Activated T-helper 2 cell treated with anti-CD3 and anti-CD28 coated beads, Interferon-gamma antibody, Interleukin-2, Interleukin-4, amounts not matched to agents 10 μg/mL and 5 μg/mL and 100 μg/mL, durations not matched to agents 14 hours and 24 hours and 36 hours (primary cell): ENCODE measurements at regions of chr6 and their contacts with region 1.

Region 1: GRCh38 chr6:157021344-157021992 is 244.3 kb downstream of the ARID1B start:
- DNase-seq: peak; percentile 89
- H3K4me3 Mint-ChIP-seq: peak overlapping the region; percentile 94
- H3K27ac Mint-ChIP-seq: peak overlapping the region; percentile 99
- H3K4me1 Mint-ChIP-seq: peaks cover 46% of the 10 kb centered on the region
- H3K27me3 Mint-ChIP-seq: no peaks in the 10 kb centered on the region

Region 2: GRCh38 chr6:155314092-155314772 is 1707.2 kb before region 1 on chr6 and contains the start of gene TFB1M:
- intact Hi-C with region 1: loop called (anchors 10 kb)
- DNase-seq: peak; percentile 99
- H3K4me3 Mint-ChIP-seq: peak within 1 kb of the TSS; percentile 96
- H3K27ac Mint-ChIP-seq: peak within 1 kb of the TSS; percentile 93
- H3K4me1 Mint-ChIP-seq: peaks cover 36% of the 10 kb centered on the region
- H3K27me3 Mint-ChIP-seq: no peaks in the 10 kb centered on the region
- total RNA-seq, gene TFB1M: 32.5 and 39.8 TPM in 2 replicates

Region 3: GRCh38 chr6:156686995-156687788 is 334.3 kb before region 1 on chr6:
- intact Hi-C with region 1: loop called (anchors 2 kb)
- DNase-seq: peak; percentile 75
- H3K4me3 Mint-ChIP-seq: peak overlapping the region; percentile 84
- H3K27ac Mint-ChIP-seq: peak overlapping the region; percentile 73
- H3K4me1 Mint-ChIP-seq: peaks cover 29% of the 10 kb centered on the region
- H3K27me3 Mint-ChIP-seq: peaks cover 24% of the 10 kb centered on the region

Region 4: DNA sequence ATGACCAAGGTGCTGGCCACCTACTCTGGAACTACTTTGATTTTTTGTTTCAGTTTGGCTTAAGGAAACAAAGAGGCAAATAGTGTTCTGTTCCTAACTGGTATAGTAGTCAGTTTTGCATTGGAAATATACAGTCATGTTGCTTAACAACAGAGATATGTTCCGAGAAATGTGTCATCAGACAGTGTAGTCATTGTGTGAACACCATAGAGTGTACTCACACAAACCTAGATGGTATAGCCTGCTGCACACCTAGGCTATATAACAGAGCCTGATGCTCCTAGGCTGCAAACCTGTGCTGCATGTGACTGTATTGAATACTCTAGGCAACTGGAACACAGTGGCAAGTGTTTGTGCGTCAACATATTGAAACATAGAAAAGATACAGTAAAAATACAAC is 163.9 kb before region 1 on chr6:
- intact Hi-C with region 1: loop called (anchors 5 kb)
- DNase-seq: no peak
- H3K4me3 Mint-ChIP-seq: no peak overlapping the region
- H3K27ac Mint-ChIP-seq: peak overlapping the region; percentile 74
- H3K4me1 Mint-ChIP-seq: peaks cover 49% of the 10 kb centered on the region
- H3K27me3 Mint-ChIP-seq: no peaks in the 10 kb centered on the region

Region 5: DNA sequence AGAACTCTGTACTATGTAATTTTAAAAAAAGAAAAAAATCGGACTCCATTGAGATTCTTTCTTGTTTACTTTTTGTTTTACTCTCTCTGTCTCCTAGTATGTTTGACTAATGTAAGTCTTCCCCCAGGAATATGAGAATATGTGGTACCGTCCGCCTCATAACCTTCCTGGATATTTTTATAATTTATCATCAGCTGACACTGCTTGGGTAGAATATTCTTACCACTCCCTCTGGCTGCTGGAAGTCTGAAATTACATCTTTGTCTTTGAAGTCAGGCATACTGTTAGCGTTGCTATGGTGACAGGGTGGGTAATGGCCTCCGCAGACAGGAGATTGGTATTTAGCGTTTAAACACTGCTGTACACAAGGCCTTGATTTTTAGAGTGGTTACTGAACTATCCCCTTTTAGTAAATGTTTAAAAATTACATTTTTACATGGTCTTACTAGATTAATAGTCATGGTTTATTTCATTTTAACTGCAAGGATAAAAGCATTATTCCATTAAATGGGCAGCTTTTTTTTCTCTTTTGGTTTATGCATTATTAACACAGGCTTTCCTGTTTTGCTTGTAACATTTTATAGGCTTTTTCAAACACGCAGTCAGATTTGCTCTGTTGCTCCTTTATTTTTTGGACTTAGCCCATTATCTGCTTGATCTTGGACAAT is 67.9 kb before region 1 on chr6:
- intact Hi-C with region 1: loop called (anchors 2 kb)
- DNase-seq: no peak
- H3K4me3 Mint-ChIP-seq: no peak overlapping the region
- H3K27ac Mint-ChIP-seq: no peak overlapping the region
- H3K4me1 Mint-ChIP-seq: peaks cover 49% of the 10 kb centered on the region
- H3K27me3 Mint-ChIP-seq: no peaks in the 10 kb centered on the region

Region 6: DNA sequence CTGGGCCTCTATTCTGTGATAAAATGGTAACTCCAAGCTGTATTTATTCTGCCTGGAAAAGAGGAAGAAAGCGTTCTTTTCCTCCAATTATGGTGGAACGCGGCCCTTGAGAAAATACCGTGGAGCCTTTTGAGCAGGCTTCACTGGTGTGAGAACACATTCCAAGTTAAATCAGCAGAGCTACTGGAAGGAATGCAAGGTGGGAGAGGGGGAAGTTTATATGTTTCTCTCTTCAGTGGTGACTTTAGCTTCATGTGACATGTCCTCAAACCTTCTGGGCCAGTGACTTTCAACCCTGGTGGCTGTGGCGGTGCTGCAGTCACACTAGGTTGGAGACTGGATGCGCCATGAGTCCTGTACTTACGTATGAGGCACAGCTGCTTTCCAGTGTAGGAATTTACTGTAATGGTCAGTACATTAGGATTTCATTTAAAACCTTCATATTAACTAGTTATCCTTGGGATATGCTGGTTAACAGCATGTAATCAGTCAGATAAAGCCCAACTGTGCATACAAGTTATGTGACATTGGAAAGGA is 22.6 kb before region 1 on chr6:
- intact Hi-C with region 1: loop called (anchors 2 kb)
- DNase-seq: no peak
- H3K4me3 Mint-ChIP-seq: no peak overlapping the region
- H3K27ac Mint-ChIP-seq: no peak overlapping the region
- H3K4me1 Mint-ChIP-seq: peaks cover 8% of the 10 kb centered on the region
- H3K27me3 Mint-ChIP-seq: no peaks in the 10 kb centered on the region

Region 7: GRCh38 chr6:157034436-157035230 is 13.2 kb after region 1 on chr6:
- intact Hi-C with region 1: no loop called
- DNase-seq: no peak
- H3K4me3 Mint-ChIP-seq: peak overlapping the region; percentile 49
- H3K27ac Mint-ChIP-seq: no peak overlapping the region
- H3K4me1 Mint-ChIP-seq: peaks cover 21% of the 10 kb centered on the region
- H3K27me3 Mint-ChIP-seq: no peaks in the 10 kb centered on the region